ENCODE measurements at regions of chr2 and their contacts with region 1.

Region 1: GRCh38 chr2:220491670-220492069 is 864.2 kb downstream of the SLC4A3 start:
- DNase-seq: no peak
- H3K4me3 ChIP-seq: no peak overlapping the region
- H3K27ac ChIP-seq: no peak overlapping the region
- H3K4me1 ChIP-seq: no peaks in the 10 kb centered on the region
- H3K27me3 ChIP-seq: no peaks in the 10 kb centered on the region
- CTCF ChIP-seq: no peak
- POLR2A ChIP-seq: no peak

Region 2: DNA sequence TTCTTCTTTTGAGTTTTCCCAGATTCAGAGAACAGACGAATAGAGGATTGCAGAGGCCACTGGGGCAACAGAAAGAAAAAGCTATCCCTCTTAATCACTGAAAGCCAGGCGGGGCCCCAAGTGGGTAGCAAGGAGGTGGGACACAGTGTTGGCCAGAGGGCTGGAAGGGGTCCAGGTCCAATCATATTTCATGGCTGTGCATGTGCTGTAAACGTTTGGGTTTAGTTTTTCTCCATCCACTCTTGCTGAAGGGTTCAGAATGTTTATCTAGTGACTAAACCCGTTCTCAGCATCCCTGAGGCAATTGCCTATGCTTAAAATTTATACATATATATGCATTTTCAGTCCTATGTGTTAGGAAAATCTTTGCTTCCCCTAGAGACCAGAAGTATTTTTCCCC is 1179.8 kb after region 1 on chr2:
- intact Hi-C with region 1: loop called (anchors 5 kb)
- DNase-seq: no peak
- H3K4me3 ChIP-seq: no peak overlapping the region
- H3K27ac ChIP-seq: no peak overlapping the region
- H3K4me1 ChIP-seq: no peaks in the 10 kb centered on the region
- H3K27me3 ChIP-seq: no peaks in the 10 kb centered on the region
- CTCF ChIP-seq: no peak
- POLR2A ChIP-seq: no peak

Measured in breast epithelium (tissue), 4 donors.